ENCODE measurements at regions of chr22 and their contacts with region 1.

Region 1: DNA sequence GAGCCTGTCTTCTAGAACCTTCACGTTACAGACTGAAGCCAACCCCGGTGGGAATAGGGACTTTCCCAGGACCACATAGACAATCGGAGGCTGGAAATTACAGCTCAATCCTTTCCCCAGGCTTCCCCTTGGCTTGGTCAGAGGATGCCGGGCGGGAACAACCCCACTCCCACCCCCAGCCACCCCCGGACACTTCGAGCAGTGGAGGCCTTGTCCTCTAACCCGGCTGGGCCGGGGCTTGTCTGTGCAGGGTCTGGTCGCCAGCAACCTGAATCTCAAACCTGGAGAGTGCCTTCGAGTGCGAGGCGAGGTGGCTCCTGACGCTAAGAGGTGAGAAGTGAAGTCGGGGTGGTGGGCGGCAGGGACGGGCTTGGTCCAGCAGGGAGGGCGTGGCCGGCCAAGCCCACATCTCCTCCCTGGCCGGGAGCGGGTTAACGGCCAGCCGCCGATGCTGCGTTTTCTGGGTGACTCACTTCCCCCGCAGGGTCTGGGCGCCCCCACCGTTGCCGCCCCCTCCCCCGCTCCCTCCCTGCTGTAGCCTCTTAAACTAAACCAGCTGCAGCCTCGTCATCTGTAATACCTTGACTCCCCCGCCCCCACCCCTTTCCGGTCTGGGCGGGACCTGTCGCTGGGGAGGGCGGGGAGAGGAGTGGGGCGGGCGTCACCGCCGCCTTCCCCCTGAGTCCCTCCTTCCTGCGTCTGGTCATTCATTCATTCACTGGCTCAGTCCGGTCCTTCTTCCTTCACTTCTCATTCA is 1.5 kb downstream of the LGALS1 start:
- DNase-seq: peak; percentile 91
- H3K4me3 ChIP-seq: peak overlapping the region; percentile 64 to 92
- H3K27ac ChIP-seq: peak overlapping the region; percentile 94
- H3K4me1 ChIP-seq: peaks cover 16 to 22% of the 10 kb centered on the region in 2 experiments; a peak in 2 of 4 replicates
- H3K27me3 ChIP-seq: no peaks in the 10 kb centered on the region
- CTCF ChIP-seq: no peak
- EP300 ChIP-seq: peak; percentile 49 to 84; a peak in 3 of 4 replicates
- RAD21 ChIP-seq: no peak

Region 2: GRCh38 chr22:37741312-37741795 is 64.4 kb after region 1 on chr22:
- CTCF ChIA-PET with region 1: interaction called, 11 read pairs
- POLR2A ChIA-PET with region 1: no interaction called
- DNase-seq: peak; percentile 95
- H3K4me3 ChIP-seq: no peak overlapping the region
- H3K27ac ChIP-seq: peak overlapping the region; percentile 42 to 87; a peak in 3 of 4 replicates
- H3K4me1 ChIP-seq: peaks cover 29 to 32% of the 10 kb centered on the region in 2 experiments; a peak in 3 of 4 replicates
- H3K27me3 ChIP-seq: no peaks in the 10 kb centered on the region
- CTCF ChIP-seq: no peak
- EP300 ChIP-seq: peak; percentile 55 to 85; a peak in 3 of 4 replicates
- RAD21 ChIP-seq: peak; percentile 30; the same call in 1 of the 2 replicates

Region 3: DNA sequence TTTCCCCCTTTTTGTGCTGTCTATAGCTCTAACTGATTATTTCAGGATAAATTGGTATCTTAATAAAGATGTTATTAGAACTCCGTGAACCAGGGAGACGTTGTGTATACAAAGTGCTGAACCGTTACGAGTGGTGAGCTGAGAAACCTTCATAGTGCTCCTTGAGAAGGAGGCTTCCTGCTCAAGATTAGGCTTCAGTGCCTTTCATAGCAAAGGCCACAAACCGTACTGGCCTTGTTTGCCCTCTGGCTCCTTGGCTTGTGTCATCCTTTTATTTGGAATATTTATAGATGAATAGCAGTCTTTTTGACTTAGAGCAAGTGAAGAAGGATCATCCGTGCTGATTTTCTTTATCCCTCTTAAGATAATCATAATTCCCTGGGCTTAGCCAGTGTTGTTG is 188.6 kb after region 1 on chr22:
- CTCF ChIA-PET with region 1: no interaction called
- POLR2A ChIA-PET with region 1: no interaction called
- DNase-seq: no peak
- H3K4me3 ChIP-seq: no peak overlapping the region
- H3K27ac ChIP-seq: no peak overlapping the region
- H3K4me1 ChIP-seq: 0 out of 4 replicates have a peak, but pooled peaks cover 0 to 2% of the 10 kb centered on the region in 2 experiments
- H3K27me3 ChIP-seq: no peaks in the 10 kb centered on the region
- CTCF ChIP-seq: no peak
- EP300 ChIP-seq: no peak
- RAD21 ChIP-seq: no peak

Measured in SK-N-SH (cell line).